ENCODE measurements at regions of chr22 and their contacts with region 1.

Region 1: DNA sequence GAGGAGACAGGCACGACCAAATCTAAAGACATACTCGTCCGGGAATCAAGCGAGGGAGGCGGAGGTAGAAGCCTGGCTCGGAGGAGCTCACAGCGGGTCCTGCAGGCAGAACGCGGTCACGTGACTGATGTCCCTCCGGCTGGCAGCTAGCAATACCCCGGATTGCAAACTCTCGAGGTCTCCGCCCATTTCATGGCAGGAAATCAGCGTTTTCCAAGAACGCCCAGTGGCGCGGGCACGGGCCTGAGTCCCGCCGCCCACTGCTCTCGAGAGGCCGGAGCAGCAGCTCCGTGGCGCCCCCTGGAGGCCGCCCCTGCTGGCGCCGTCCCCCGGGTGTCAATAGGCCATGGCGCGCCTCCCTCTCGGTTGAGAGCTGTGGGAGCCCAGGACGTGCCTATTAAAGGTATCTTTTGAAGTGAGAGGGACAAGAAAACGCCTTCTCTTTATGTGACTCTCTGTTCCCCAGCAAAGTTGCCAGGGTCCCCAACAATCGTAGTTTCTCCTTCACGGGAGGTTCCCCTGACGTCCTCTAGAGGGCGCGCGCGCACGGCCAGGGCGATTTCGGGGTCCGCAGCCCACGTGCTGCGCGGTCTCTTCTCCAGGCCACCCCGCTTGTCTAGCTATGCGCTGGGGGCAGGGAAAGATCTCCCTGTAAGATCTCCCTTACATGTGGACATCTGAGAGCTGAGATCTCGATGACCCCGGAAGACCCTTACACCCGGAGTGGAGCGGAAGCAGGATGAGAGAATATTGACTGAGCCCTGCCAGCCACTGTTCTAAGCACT is 37.3 kb upstream of the RBFOX2 start:
- DNase-seq: peak; percentile 64
- H3K4me3 ChIP-seq: peak overlapping the region; percentile 51
- H3K27me3 ChIP-seq: no peaks in the 10 kb centered on the region
- CTCF ChIP-seq: peak; percentile 98

Region 2: DNA sequence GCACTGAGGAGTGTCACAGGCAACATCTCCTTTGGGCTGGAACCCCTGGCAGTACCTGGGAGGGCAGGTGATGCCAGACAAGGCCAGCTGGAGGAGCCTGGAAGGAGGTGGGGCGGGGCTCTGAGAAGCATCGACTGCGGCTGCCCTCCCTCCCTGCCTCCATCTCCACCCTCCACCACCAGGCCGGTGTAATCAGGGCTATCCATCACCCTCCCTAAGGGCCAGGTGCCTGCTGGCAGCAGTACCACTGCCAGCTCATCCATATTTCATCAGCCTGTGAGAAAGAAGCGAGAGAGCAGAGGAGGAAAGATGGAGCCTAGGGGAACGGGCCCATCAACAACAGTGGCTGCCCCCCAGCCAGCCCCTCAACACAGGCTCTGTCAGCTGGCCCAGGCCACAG is 576.7 kb before region 1 on chr22:
- CTCF ChIA-PET with region 1: no interaction called
- POLR2A ChIA-PET with region 1: no interaction called
- DNase-seq: no peak
- H3K4me3 ChIP-seq: no peak overlapping the region
- H3K27me3 ChIP-seq: peaks cover 13% of the 10 kb centered on the region
- CTCF ChIP-seq: no peak

Region 3: DNA sequence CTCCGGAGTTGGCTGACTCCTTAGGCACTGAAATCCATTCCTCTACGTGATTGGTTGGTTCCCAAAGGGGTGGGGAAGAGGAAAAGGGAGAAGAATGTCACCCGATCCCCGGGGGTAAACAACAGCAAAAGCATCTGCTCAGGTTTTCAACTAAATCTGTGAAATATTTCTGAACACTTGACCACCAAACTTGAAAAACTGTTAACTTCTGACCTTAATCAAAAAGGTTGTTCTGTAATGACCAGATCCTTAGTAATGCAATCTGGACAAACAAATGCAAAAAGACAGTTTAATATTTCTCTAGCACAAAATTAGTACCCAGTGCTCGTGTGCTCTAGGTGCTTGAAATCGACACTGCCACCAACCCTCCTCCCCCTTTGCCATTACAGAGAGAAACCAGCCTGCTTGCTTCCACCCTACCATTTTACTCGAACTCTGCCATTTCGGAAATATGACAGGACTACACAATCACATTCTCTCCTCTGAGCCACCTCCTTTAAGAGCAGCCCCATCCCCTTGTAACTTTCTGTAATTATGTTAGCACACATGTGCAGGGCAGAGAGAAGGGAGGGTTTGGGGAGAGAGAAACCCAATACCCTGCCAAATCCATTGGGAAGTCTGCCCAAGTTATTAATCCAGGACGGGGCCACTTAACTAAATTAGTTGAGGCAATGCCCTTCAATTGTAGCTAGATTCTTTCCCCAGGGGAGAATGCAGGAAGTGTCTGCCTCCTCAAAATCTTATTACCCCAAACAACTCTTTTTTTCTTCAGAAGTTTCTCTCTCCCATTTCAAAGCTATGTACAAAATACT is 151.1 kb before region 1 on chr22:
- CTCF ChIA-PET with region 1: interaction called, 36 read pairs
- POLR2A ChIA-PET with region 1: no interaction called
- DNase-seq: no peak
- H3K4me3 ChIP-seq: peak overlapping the region; percentile 40
- H3K27me3 ChIP-seq: no peaks in the 10 kb centered on the region
- CTCF ChIP-seq: no peak

Region 4: DNA sequence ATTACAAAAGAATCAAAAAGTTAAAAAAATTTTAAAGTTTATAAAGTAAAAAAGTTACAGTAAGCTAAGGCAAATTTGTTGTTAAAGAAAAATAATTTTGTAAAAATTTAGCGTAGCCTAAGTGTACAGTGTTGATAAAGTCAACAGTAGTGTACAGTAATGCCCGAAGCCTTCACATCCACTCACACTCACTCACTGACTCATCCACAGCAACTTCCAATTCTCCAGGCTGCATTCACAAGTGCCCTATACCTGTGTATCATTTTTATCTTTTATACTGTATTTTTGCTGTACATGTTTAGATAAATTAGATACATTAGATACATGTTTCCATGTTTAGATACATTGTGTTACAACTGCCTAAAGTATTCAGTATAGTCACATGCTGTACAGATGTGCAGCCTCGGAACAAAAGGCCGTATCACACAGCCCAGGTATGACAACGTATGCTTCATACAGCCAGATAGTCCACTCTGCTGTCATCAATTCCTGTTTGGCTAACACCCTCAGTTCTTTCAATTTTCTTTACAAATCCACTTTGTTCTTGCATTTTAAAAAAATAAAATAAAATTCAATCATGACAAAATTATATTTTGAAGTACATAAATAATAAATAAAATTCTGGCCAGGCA is 118.1 kb before region 1 on chr22:
- CTCF ChIA-PET with region 1: interaction called, 27 read pairs
- POLR2A ChIA-PET with region 1: no interaction called
- DNase-seq: no peak
- H3K4me3 ChIP-seq: no peak overlapping the region
- H3K27me3 ChIP-seq: no peaks in the 10 kb centered on the region
- CTCF ChIP-seq: no peak

Region 5: DNA sequence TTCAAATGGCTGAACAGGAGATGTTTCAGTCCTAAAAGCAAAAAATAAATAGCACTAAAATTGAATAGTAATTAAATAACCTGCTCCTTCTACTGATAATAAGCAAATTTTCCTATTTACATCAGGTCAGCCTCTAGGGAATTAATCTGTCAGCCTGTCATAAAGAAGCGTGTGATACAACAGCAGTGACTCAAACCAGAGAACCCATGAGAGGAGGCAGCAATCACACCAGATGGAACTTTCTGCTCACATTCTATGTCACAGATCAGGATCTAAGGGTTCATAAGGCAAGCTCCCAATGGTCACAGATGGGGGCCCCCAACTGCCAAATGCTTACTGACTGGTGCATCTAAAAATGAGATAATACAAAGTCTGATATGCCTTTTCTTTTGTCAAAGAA is 78.5 kb before region 1 on chr22:
- CTCF ChIA-PET with region 1: interaction called, 21 read pairs
- POLR2A ChIA-PET with region 1: no interaction called
- DNase-seq: no peak
- H3K4me3 ChIP-seq: no peak overlapping the region
- H3K27me3 ChIP-seq: no peaks in the 10 kb centered on the region
- CTCF ChIP-seq: no peak

Region 6: DNA sequence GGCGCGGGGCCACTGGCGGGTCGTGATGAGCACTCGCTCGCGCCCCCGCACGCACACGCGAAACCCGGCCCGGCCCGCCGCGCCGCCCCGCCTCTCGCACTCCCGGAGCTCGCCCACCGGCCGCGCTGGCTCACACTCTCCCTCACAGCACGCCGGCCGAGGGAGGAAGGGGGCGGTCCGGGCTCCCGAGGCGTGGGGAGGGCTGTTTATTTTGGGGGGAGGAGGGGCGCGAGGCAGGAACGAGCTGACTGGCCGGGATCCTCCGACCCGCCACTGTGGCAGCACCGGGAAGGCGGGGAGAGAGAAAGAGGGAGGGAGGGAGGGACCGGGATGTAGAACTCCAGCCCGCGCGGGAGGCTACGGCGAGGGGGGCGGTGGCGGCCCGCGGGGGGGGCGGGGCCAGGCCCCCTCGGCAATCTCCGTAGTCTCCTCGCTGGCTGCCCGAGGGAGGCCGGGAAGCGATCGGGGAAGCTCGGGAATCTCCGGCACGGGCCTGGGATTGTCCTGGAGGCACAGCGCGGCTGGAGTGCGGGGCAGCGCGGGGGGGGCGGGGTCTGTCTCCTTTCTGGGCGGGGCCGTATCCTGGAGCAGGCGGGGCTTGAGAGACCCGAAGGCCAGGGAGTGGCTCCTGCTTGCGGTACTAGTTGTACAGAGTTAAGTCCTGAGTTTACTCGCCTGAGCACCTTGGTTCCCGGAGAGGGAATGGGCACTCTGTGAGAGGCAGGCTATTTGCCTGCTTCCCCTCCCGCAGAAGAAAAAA is 37.1 kb before region 1 on chr22 and contains the start of gene RBFOX2:
- CTCF ChIA-PET with region 1: interaction called, 64 read pairs
- POLR2A ChIA-PET with region 1: no interaction called
- DNase-seq: peak; percentile 75
- H3K4me3 ChIP-seq: peak within 1 kb of the TSS; percentile 97
- H3K27me3 ChIP-seq: no peaks in the 10 kb centered on the region
- CTCF ChIP-seq: no peak
- polyA plus RNA-seq, gene RBFOX2: 221 and 222 TPM in 2 replicates

Region 7: GRCh38 chr22:36117053-36117554 is 51.1 kb after region 1 on chr22:
- CTCF ChIA-PET with region 1: interaction called, 29 read pairs
- POLR2A ChIA-PET with region 1: no interaction called
- DNase-seq: no peak
- H3K4me3 ChIP-seq: no peak overlapping the region
- H3K27me3 ChIP-seq: no peaks in the 10 kb centered on the region
- CTCF ChIP-seq: no peak

Region 8: GRCh38 chr22:36334709-36335620 is 269.0 kb after region 1 on chr22:
- CTCF ChIA-PET with region 1: no interaction called
- POLR2A ChIA-PET with region 1: no interaction called
- DNase-seq: no peak
- H3K4me3 ChIP-seq: no peak overlapping the region
- H3K27me3 ChIP-seq: no peaks in the 10 kb centered on the region
- CTCF ChIP-seq: no peak

Region 9: GRCh38 chr22:36409911-36410756 is 344.2 kb after region 1 on chr22:
- CTCF ChIA-PET with region 1: no interaction called
- POLR2A ChIA-PET with region 1: no interaction called
- DNase-seq: no peak
- H3K4me3 ChIP-seq: peak overlapping the region; percentile 23; the same call in 1 of the 2 replicates
- H3K27me3 ChIP-seq: no peaks in the 10 kb centered on the region
- CTCF ChIP-seq: no peak